ENCODE measurements at regions of chr10 and their contacts with region 1.

Region 1: DNA sequence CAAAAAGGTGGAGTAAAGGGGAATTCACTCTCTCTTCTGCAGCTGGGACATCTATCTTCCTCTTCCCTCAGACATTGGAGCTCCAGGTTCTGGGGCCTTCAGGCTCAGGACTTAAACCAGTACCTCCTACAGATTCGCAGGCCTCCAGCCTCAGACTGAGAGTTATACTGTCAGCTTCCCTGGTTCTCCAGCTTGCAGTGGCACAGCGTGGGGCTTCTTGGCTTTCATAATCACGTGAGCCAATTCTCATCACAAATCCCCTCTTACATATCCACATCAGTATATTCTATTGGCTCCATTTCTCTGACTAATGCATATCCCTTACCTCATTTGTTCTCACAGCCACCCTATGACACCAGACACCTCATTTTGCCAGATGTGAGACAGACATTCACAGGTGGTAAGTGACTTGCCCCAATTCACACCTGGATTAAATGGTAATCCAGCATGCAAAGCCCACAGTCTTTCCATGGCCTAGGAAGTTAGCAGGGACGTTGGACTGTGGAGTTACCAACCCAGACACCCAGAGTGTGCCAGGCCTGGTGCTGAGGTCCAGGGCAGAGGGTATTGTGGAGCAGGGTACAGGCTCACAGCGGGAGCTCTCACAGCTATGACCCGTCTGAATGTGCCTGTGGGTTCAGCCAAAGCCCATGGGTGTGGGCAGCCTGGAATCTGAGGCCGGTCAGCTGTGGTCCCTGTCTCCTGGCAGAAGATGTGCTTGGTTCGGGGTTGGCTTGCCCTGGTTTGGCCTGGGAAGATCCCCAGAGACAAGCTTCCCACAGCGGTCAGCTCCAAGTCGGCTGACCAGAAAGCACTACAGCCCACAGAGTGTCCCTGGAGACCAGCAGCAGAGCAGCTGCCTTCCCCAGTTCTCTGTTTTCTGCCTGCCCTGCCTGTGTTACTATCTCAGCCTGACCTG is 18.4 kb upstream of the ZCCHC24 start:
- DNase-seq: no peak
- H3K4me3 ChIP-seq: no peak overlapping the region
- H3K27ac ChIP-seq: no peak overlapping the region
- H3K4me1 ChIP-seq: no peaks in the 10 kb centered on the region
- H3K27me3 ChIP-seq: no peaks in the 10 kb centered on the region; a peak in 1 of 7 replicates
- CTCF ChIP-seq: no peak
- EP300 ChIP-seq: no peak
- POLR2A ChIP-seq: no peak
- RAD21 ChIP-seq: no peak

Region 2: GRCh38 chr10:79400146-79401004 is 63.5 kb before region 1 on chr10:
- CTCF ChIA-PET with region 1: interaction called, 37 read pairs
- POLR2A ChIA-PET with region 1: no interaction called
- DNase-seq: peak in 1 of 2 experiments; percentile 89
- H3K4me3 ChIP-seq: no peak overlapping the region
- H3K27ac ChIP-seq: no peak overlapping the region
- H3K4me1 ChIP-seq: peaks cover 8 to 30% (median 15%) of the 10 kb centered on the region in 4 experiments
- H3K27me3 ChIP-seq: no peaks in the 10 kb centered on the region; a peak in 1 of 7 replicates
- CTCF ChIP-seq: peak; percentile 80 to 95 (median 86)
- EP300 ChIP-seq: no peak
- POLR2A ChIP-seq: no peak
- RAD21 ChIP-seq: peak; percentile 69 to 78

Region 3: GRCh38 chr10:79417266-79417665 is 46.6 kb before region 1 on chr10:
- CTCF ChIA-PET with region 1: interaction called, 12 read pairs
- POLR2A ChIA-PET with region 1: no interaction called
- DNase-seq: no peak
- H3K4me3 ChIP-seq: no peak overlapping the region
- H3K27ac ChIP-seq: no peak overlapping the region
- H3K4me1 ChIP-seq: peaks cover 0 to 8% (median 3%) of the 10 kb centered on the region in 4 experiments; a peak in 6 of 7 replicates
- H3K27me3 ChIP-seq: no peaks in the 10 kb centered on the region
- CTCF ChIP-seq: peak in 2 of 3 experiments; percentile 4 to 9; a peak in 2 of 4 replicates
- EP300 ChIP-seq: no peak
- POLR2A ChIP-seq: no peak
- RAD21 ChIP-seq: peak in 1 of 2 experiments; percentile 13; a peak in 1 of 4 replicates

Region 4: DNA sequence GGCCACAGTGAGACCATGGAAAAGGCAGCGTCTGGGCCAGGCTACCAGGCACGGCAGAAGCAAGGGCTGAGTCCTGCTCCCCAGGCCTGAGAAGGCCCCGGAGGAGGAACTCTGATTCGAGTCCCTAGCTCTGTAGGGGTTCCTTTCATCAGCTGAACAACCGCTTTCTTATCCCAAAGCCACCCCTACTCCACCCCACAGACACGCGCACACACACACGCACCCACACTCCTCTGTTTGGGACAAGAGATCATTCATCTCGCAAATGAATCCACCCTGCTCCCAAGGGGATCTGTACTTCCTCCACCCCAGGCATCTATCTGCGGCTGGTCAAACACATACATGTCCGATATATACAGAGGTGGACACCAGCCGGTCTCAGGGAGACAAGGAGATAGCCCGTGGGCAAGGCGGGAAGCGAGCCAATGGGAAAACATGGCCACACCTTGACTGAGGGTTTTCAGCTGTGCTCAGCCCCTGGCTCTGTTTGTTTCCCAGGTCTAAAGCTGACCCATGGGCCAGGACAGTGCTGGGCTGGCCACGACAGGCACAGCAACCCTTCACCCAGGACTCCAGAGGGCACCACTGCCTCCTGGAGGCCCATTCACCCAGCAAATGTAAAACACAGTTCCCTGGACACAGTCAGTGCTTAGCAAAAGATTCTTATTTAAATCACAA is 25.7 kb before region 1 on chr10:
- CTCF ChIA-PET with region 1: interaction called, 13 read pairs
- POLR2A ChIA-PET with region 1: no interaction called
- DNase-seq: no peak
- H3K4me3 ChIP-seq: no peak overlapping the region
- H3K27ac ChIP-seq: no peak overlapping the region
- H3K4me1 ChIP-seq: peaks cover 0 to 11% (median 2%) of the 10 kb centered on the region in 4 experiments; a peak in 4 of 7 replicates
- H3K27me3 ChIP-seq: peaks cover 0 to 4% (median 1%) of the 10 kb centered on the region in 4 experiments; a peak in 3 of 7 replicates
- CTCF ChIP-seq: peak; percentile 22 to 54 (median 52); a peak in 3 of 4 replicates
- EP300 ChIP-seq: no peak
- POLR2A ChIP-seq: no peak
- RAD21 ChIP-seq: peak; percentile 39 to 60

Region 5: GRCh38 chr10:79496896-79497295 is 33.1 kb after region 1 on chr10:
- CTCF ChIA-PET with region 1: interaction called, 101 read pairs
- POLR2A ChIA-PET with region 1: no interaction called
- DNase-seq: no peak
- H3K4me3 ChIP-seq: no peak overlapping the region
- H3K27ac ChIP-seq: no peak overlapping the region
- H3K4me1 ChIP-seq: no peaks in the 10 kb centered on the region
- H3K27me3 ChIP-seq: peaks cover 0 to 2% (median 0%) of the 10 kb centered on the region in 4 experiments; a peak in 3 of 7 replicates
- CTCF ChIP-seq: no peak
- EP300 ChIP-seq: no peak
- POLR2A ChIP-seq: no peak
- RAD21 ChIP-seq: no peak